Tibial artery (tissue), 4 donors: ENCODE measurements at regions of chr4 and their contacts with region 1.

Region 1: DNA sequence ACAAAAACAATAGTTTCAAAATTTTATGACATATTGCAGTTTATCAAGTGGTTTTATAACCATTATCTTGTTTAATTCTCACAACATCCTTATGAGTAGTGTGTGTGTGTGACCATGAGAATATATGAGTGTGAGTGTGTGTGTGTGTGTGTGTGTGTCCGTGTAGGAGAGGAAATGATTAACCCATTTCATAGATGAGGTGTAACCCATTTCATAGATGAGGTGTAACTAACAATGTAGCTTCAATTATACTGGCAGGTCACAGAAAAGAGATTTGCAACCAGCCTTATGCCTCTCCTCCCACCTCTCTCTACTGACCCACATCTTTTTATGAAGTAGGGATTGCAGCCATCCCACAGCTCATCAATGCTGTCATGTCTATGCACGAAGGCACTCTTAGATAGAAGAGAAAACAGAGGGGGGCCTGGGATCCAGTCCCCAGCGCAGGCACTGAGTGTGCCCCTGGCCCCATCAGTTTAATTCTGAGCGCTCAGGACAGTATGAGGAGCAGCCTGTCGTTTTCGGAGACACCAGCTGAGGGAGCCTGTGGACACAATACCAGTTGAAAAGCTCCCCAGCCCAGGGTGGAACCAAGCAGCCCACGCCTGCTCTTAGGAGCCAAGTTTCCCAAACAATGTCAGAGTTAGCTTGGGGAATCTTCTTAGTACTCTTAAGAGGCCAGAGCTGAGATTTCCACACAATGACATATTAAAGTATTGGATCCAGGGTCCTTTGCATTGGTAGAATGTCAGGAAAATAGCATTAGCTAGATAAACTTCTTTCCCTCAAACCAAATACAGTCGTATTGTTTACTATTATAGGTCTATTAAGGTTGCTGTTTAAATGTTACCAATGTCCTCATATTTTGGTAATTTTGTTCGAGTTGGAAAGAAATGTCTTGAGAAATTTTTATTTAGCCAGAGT is 88.6 kb downstream of the PALLD start:
- DNase-seq: peak; percentile 89
- H3K4me3 ChIP-seq: no peak overlapping the region
- H3K27ac ChIP-seq: no peak overlapping the region
- H3K4me1 ChIP-seq: peaks cover 0 to 28% (median 23%) of the 10 kb centered on the region in 4 donors
- H3K27me3 ChIP-seq: no peaks in the 10 kb centered on the region
- CTCF ChIP-seq: peak; percentile 72 to 77

Region 2: DNA sequence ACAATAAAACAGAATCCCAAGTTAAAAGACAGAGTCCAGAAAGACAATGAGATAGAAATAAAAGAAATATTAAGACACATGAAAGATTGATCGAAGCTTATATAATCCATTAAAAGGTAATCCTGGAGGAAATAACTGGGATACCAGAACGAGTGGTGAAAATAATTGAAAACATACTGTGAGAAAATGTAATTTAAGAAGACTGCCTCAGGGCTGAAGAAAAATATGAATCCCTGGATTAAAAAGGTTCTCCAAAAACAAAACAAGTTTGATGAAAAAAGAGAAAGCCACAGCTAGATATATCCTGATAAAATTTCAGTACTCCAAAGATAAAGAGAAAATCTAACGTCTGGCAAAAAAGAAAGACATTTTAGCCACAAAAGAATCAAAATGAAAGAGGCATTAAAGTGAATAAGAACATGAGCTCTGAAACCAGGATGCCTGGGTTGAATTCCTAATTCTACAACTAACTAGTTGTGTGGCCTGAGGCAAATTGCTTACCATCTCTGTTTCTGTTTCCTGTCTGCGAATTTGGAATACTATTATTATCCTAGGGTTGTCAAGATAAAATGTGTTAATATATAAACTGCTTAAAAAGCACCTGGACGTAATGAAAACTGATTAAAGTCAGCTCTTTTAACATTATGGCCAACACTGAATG is 110.6 kb before region 1 on chr4:
- intact Hi-C with region 1: no loop called
- DNase-seq: no peak
- H3K4me3 ChIP-seq: no peak overlapping the region
- H3K27ac ChIP-seq: no peak overlapping the region
- H3K4me1 ChIP-seq: no peaks in the 10 kb centered on the region
- H3K27me3 ChIP-seq: no peaks in the 10 kb centered on the region
- CTCF ChIP-seq: no peak

Region 3: GRCh38 chr4:168631241-168632162 is 46.1 kb after region 1 on chr4:
- intact Hi-C with region 1: loop called (anchors 5 kb)
- DNase-seq: peak; percentile 43 to 77
- H3K4me3 ChIP-seq: peak overlapping the region; percentile 58 to 76
- H3K27ac ChIP-seq: peak overlapping the region; percentile 76 to 79
- H3K4me1 ChIP-seq: peaks cover 0 to 48% (median 38%) of the 10 kb centered on the region in 4 donors
- H3K27me3 ChIP-seq: no peaks in the 10 kb centered on the region
- CTCF ChIP-seq: peak; percentile 53 to 59

Region 4: DNA sequence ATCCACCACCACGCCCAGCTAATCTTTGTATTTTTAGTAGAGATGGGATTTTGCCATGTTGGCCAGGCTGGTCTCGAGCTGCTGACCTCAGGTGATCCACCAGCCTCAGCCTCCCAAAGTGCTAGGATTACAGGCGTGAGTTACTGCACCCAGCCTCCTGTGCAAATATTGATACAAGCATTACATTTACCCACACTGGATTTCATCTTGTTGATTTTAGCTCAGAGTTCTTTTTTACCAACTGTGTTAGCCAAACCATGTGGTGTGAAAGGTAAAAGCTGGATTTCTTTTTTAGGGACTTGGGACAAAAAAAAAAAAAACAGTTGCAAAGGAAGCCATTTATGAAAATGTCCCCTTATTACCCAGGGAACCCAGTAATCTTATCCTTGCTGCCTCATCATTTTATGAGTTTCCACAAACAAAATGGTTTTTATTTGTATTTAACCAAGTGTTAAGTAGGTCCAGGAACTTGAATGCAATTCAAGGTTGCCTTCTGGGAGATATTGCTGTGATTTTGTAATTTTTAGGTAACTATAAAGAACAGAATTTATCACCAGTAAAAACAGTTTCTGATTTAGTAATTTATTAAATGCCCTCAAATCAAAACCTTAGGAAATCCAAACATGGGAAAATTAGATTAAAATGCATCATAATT is 113.9 kb after region 1 on chr4:
- intact Hi-C with region 1: no loop called
- DNase-seq: no peak
- H3K4me3 ChIP-seq: no peak overlapping the region
- H3K27ac ChIP-seq: peak overlapping the region in 1 of 2 donors; percentile 13
- H3K4me1 ChIP-seq: peaks cover 0 to 16% (median 2%) of the 10 kb centered on the region in 4 donors
- H3K27me3 ChIP-seq: no peaks in the 10 kb centered on the region
- CTCF ChIP-seq: no peak

Region 5: DNA sequence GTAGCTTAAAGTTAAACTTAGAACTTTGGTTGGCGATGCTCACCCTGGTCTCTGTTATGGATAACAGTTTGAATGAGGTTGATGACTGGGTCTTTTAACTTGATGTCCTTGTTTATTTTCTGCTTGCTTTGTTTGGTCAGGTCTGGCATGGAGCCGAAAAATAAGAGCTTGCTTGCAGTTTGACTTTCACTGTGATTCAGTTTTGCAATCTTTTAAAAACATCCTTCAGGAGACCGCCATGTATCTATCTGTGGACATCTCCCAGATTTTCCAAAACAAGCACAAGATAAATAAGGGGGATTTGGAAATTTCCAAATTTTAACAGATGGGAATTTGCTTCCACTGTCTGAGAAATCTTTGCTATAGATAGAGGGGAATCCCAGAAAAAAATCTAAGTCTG is 158.2 kb after region 1 on chr4:
- intact Hi-C with region 1: no loop called
- DNase-seq: no peak
- H3K4me3 ChIP-seq: no peak overlapping the region
- H3K27ac ChIP-seq: no peak overlapping the region
- H3K4me1 ChIP-seq: no peaks in the 10 kb centered on the region
- H3K27me3 ChIP-seq: no peaks in the 10 kb centered on the region
- CTCF ChIP-seq: no peak

Region 6: GRCh38 chr4:168917138-168917779 is 331.8 kb after region 1 on chr4:
- intact Hi-C with region 1: loop called (anchors 2 kb)
- DNase-seq: no peak
- H3K4me3 ChIP-seq: no peak overlapping the region
- H3K27ac ChIP-seq: peak overlapping the region; percentile 31 to 54
- H3K4me1 ChIP-seq: peaks cover 0 to 40% (median 0%) of the 10 kb centered on the region in 4 donors
- H3K27me3 ChIP-seq: no peaks in the 10 kb centered on the region
- CTCF ChIP-seq: peak; percentile 50 to 58